CD8-positive, alpha-beta T cell (primary cell): ENCODE measurements at regions of chr5 and their contacts with region 1.

Region 1: DNA sequence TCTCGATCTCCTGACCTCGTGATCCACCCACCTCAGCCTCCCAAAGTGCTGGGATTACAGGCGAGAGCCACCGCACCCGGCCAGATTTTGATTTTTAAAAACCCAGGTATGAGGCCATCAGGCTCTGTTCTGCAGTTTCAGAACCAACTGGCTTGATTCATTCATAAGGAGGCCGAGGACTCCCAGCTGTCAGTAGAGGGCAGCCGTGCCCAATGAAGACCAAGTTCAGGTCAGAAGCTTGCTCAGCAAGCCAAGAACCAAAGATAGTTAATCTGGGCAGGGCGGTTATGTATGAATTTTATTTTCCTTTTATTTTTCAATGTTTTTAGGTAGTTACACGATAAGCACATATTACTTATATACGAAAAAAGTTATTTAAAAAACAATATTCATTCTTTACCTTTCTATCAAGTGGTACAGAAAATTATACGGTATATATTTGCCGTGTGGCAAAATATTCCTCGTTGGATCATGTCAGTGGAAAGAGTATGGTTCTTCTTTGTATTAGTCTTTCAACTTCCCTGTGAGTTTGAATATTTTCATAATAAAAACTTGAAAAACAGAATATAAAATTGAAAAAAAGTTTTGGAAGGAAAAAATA is 18.0 kb downstream of the MGAT1 start:
- DNase-seq: peak; percentile 55 to 84 (median 77)
- ATAC-seq: peak; percentile 84
- H3K4me3 ChIP-seq: no peak overlapping the region
- H3K4me3 Mint-ChIP-seq: no peak overlapping the region
- H3K27ac ChIP-seq: no peak overlapping the region
- H3K27ac Mint-ChIP-seq: peak overlapping the region; percentile 1
- H3K4me1 ChIP-seq: no peaks in the 10 kb centered on the region
- H3K4me1 Mint-ChIP-seq: peaks cover 43% of the 10 kb centered on the region
- H3K27me3 ChIP-seq: no peaks in the 10 kb centered on the region
- H3K27me3 Mint-ChIP-seq: no peaks in the 10 kb centered on the region
- CTCF ChIP-seq: peak; percentile 74

Region 2: GRCh38 chr5:180810210-180810958 is 25.8 kb after region 1 on chr5:
- CTCF ChIA-PET with region 1: interaction called, 6 read pairs
- POLR2A ChIA-PET with region 1: interaction called, 4 read pairs
- intact Hi-C with region 1: loop called in 1 of 2 experiments (anchors 2 kb)
- DNase-seq: peak; percentile 91 to 99 (median 97)
- ATAC-seq: peak; percentile 79
- H3K4me3 ChIP-seq: peak overlapping the region; percentile 66 to 96
- H3K4me3 Mint-ChIP-seq: peak overlapping the region; percentile 84
- H3K27ac ChIP-seq: peak overlapping the region; percentile 94 to 98
- H3K27ac Mint-ChIP-seq: peak overlapping the region; percentile 100
- H3K4me1 ChIP-seq: peaks cover 50% of the 10 kb centered on the region
- H3K4me1 Mint-ChIP-seq: peaks cover 72% of the 10 kb centered on the region
- H3K27me3 ChIP-seq: no peaks in the 10 kb centered on the region
- H3K27me3 Mint-ChIP-seq: no peaks in the 10 kb centered on the region
- CTCF ChIP-seq: no peak

Region 3: DNA sequence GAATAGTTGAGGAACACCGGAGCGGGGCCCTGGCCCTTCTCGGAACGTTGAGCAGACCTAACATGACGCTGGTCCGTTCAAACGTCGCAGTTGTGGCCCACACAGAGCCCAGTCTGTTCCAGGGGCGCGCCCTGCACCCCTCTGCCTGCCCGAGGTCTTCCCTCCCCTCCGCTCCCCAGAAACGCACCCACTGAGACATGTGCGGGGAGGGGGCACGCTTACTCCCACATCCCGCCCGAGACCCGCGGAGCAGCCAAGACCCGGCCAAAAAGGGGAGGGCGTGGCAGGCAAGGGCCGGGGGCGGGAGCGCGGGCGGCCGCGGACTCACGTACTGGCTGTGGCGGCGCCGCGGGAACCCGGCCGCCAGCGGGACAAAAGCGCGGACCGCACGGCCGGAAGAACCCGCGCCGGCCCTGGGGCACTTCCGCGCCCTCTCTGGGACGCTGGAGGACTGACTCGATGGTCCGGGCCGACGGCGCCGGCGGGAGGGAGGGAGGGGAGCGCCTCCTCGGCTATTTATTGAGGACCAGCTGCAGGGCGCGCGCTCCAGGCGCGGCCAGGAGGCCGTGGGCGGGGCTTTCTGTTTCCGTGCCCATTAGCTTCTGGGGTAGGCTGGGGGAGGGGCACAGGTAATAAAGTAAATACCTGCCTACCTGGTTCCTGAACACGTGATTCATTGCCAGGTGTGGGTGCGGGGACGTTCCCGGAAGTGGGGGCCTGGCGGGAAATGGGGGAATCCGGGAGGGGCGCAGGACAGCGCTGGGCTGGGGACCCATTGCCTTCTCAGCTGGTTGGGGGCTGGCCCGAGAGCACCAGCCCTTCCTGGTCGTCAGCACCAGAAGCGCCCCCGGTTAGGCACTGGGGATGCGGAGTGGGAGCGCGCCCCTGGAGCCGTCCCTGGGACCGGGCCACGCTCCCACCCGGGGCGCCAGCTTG is 76.6 kb after region 1 on chr5 and contains the start of gene ZFP62:
- CTCF ChIA-PET with region 1: interaction called, 3 read pairs
- POLR2A ChIA-PET with region 1: interaction called, 4 read pairs
- intact Hi-C with region 1: loop called in 1 of 2 experiments (anchors 2 kb)
- DNase-seq: peak; percentile 81 to 94 (median 86)
- ATAC-seq: peak; percentile 71
- H3K4me3 ChIP-seq: peak within 1 kb of the TSS; percentile 79 to 86
- H3K4me3 Mint-ChIP-seq: peak within 1 kb of the TSS; percentile 94
- H3K27ac ChIP-seq: peak within 1 kb of the TSS; percentile 65 to 85
- H3K27ac Mint-ChIP-seq: peak within 1 kb of the TSS; percentile 96
- H3K4me1 ChIP-seq: no peaks in the 10 kb centered on the region
- H3K4me1 Mint-ChIP-seq: peaks cover 29% of the 10 kb centered on the region
- H3K27me3 ChIP-seq: no peaks in the 10 kb centered on the region
- H3K27me3 Mint-ChIP-seq: no peaks in the 10 kb centered on the region
- CTCF ChIP-seq: peak; percentile 8
- total RNA-seq, gene ZFP62: 13.7 to 13.9 TPM

Region 4: GRCh38 chr5:181052672-181053487 is 268.3 kb after region 1 on chr5:
- CTCF ChIA-PET with region 1: no interaction called
- POLR2A ChIA-PET with region 1: no interaction called
- intact Hi-C with region 1: loop called in 1 of 2 experiments (anchors 10 kb)
- DNase-seq: peak in 2 of 9 experiments; percentile 19 to 29
- ATAC-seq: no peak
- H3K4me3 ChIP-seq: peak overlapping the region in 1 of 2 experiments; percentile 45
- H3K4me3 Mint-ChIP-seq: peak overlapping the region; percentile 78
- H3K27ac ChIP-seq: no peak overlapping the region
- H3K27ac Mint-ChIP-seq: no peak overlapping the region
- H3K4me1 ChIP-seq: peaks cover 13% of the 10 kb centered on the region
- H3K4me1 Mint-ChIP-seq: peaks cover 15% of the 10 kb centered on the region
- H3K27me3 ChIP-seq: peaks cover 22 to 26% of the 10 kb centered on the region in 2 experiments
- H3K27me3 Mint-ChIP-seq: peaks cover 81% of the 10 kb centered on the region
- CTCF ChIP-seq: no peak

Region 5: GRCh38 chr5:181159286-181159829 is 374.8 kb after region 1 on chr5:
- CTCF ChIA-PET with region 1: interaction called, 6 read pairs
- POLR2A ChIA-PET with region 1: no interaction called
- intact Hi-C with region 1: loop called (anchors 2 to 5 kb)
- DNase-seq: peak; percentile 87 to 96 (median 91)
- ATAC-seq: peak; percentile 60
- H3K4me3 ChIP-seq: no peak overlapping the region
- H3K4me3 Mint-ChIP-seq: peak overlapping the region; percentile 68
- H3K27ac ChIP-seq: peak overlapping the region; percentile 78 to 99
- H3K27ac Mint-ChIP-seq: peak overlapping the region; percentile 91
- H3K4me1 ChIP-seq: peaks cover 22% of the 10 kb centered on the region
- H3K4me1 Mint-ChIP-seq: peaks cover 20% of the 10 kb centered on the region
- H3K27me3 ChIP-seq: no peaks in the 10 kb centered on the region
- H3K27me3 Mint-ChIP-seq: peaks cover 9% of the 10 kb centered on the region
- CTCF ChIP-seq: peak; percentile 88